Right ventricle myocardium inferior (tissue), 1 donor: ENCODE measurements at regions of chrX and their contacts with region 1.

Region 1: DNA sequence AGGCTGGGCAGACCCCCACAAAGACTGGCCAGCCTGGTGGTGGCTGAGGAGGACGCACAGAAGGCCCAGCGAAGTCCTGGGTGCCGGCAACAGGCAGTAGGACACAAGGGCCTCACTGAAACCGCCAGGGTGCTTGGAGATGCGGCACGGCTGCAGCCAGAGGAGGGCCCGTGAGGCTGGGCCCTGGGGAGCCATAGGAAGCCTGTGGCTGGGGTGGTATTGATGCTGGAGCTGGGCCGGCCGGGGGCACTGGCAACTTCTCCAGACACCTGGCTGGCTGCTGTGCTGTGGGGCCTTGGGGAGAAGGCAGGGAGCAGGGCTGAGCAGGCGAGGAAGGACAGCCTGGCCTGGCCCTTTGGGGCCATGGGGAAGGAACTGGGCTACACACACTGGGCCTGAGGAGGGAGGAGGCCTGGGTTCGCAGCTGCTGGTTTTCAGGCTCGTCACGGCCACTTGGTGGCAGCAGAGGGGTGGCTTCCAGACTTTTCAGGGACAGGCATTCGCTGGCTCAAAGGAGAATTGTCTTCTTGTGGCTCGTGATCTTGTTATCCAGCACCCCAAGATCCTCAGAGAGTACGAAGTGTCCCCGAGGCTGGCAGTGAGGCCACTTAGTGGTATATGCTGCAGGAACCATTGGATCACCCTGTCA is 37.2 kb downstream of the ATP2B3 start:
- DNase-seq: peak; percentile 75
- ATAC-seq: peak; percentile 65

Region 2: DNA sequence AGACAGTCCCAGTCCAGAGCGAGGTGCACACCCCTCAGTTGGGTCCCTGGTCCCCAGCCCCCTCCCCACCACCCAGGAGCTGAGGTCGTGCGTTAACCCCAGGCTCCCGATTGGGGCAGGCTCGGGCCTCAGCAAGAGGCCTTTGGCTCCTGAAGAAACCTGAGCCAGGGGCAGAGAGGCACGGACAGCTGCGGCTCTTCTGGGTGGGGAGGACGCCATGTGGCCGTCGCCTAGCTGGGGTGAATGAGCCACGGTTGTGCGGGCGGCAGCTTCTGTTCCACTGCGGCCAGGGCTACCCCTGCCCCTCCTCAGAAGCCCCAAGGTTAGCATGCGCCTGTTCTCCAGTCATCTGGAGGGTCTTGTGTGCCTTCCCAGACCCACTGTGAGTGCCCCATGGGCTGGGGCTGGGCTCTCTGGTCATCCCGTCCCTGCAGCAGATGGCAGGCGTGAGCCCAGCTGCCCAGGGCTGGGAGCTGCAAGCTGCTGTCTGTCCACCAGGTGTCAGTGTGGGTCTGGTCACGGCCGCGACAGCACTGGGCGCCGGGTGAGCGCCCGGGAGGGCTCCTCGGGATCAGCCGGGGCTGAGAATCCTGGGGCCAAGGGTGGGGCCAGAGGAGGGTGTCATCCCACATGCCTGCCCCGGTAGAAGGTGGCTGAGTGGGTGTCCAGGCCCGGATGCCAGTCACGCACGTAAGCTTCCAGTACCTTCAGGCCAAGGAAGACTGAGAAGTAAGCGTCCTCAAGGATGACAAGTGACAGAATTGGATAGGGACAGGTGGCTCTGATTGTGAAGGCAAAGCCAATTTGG is 15.3 kb before region 1 on chrX:
- intact Hi-C with region 1: no loop called
- DNase-seq: peak; percentile 79
- ATAC-seq: peak; percentile 87

Region 3: GRCh38 chrX:153649178-153649914 is 94.7 kb after region 1 on chrX:
- intact Hi-C with region 1: loop called (anchors 5 kb)
- DNase-seq: peak; percentile 21
- ATAC-seq: no peak